IMR-90 (cell line): ENCODE measurements at regions of chr3 and their contacts with region 1.

Region 1: DNA sequence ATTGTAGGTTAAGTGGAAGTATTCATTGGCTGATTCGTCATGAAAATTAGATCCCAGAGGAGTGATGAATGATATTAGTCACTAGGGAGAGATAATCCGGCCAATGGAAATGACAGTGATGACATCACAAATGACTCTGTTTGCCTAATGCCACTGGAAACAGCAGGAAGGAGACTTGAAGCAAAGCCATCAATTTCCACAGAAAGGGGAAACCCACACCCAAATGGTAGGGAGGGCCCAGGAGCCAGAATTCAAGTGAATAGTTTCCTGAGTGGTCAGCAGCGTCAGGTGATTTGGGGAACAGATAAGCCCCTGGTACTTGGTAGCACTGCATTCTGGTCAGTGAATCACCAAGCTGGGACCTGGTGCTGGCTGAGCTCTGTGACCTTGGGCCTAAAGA is 3.3 kb upstream of the ADAMTS9 start:
- DNase-seq: peak; percentile 35
- ATAC-seq: no peak
- H3K4me3 ChIP-seq: no peak overlapping the region
- H3K27ac ChIP-seq: no peak overlapping the region
- H3K4me1 ChIP-seq: no peaks in the 10 kb centered on the region
- H3K27me3 ChIP-seq: no peaks in the 10 kb centered on the region
- CTCF ChIP-seq: no peak
- POLR2A ChIP-seq: no peak
- RAD21 ChIP-seq: no peak

Region 2: GRCh38 chr3:64595253-64595694 is 95.8 kb before region 1 on chr3:
- CTCF ChIA-PET with region 1: no interaction called
- POLR2A ChIA-PET with region 1: no interaction called
- dilution Hi-C with region 1: no loop called
- in situ Hi-C with region 1: no loop called
- intact Hi-C with region 1: no loop called
- DNase-seq: peak; percentile 70
- ATAC-seq: peak; percentile 66
- H3K4me3 ChIP-seq: no peak overlapping the region
- H3K27ac ChIP-seq: no peak overlapping the region
- H3K4me1 ChIP-seq: no peaks in the 10 kb centered on the region; the same call in 1 of the 2 replicates
- H3K27me3 ChIP-seq: no peaks in the 10 kb centered on the region
- CTCF ChIP-seq: no peak
- POLR2A ChIP-seq: no peak
- RAD21 ChIP-seq: no peak

Region 3: DNA sequence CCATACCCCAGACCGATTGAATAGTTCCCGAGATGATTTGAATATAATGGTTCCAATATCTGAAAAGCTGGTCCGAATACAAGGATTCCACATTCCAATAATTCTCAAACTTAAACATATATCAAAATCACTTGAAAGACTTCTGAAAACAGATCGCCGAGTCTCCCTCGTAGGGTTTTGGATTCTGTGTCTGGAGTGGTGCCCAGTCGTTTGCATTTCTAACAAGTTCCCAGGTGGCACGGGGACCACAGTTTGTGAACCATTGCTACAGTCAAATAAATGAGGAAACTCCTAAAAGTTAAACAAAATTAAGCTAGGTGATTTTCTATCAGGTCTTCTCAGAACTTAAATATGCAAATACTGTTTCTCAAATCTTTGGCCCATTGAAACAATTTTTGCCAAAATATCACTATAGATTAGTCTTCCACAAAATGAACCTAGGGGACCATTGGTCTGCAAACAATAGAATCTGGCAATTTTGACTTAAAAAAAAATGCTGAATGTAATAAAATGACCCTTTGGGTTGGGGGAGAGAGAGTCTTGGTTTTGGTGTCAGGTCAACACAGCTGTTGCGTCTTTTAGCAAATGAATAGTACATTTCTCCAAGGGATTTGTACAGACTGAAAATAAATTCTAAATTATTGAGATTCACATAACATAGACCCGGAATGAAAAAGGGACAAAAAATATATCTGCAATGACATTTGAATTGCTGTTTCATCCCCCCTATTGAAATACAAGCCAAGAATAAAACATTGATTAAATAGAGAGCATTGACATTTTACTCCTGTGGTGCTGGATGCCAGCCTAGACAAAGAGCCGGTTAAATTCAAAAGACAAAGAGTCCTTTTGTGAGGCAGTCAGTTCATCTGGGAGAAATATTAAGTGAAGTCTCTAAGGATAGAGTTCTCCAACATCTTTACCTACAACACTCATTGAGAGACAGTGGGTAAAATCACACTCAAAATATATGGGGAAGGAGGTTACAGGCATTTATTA is 172.5 kb after region 1 on chr3:
- CTCF ChIA-PET with region 1: no interaction called
- POLR2A ChIA-PET with region 1: no interaction called
- dilution Hi-C with region 1: no loop called
- in situ Hi-C with region 1: no loop called
- intact Hi-C with region 1: no loop called
- DNase-seq: no peak
- ATAC-seq: no peak
- H3K4me3 ChIP-seq: no peak overlapping the region
- H3K27ac ChIP-seq: no peak overlapping the region
- H3K4me1 ChIP-seq: peaks cover 2% of the 10 kb centered on the region; the same call in 1 of the 2 replicates
- H3K27me3 ChIP-seq: no peaks in the 10 kb centered on the region
- CTCF ChIP-seq: no peak
- POLR2A ChIP-seq: no peak
- RAD21 ChIP-seq: no peak

Region 4: DNA sequence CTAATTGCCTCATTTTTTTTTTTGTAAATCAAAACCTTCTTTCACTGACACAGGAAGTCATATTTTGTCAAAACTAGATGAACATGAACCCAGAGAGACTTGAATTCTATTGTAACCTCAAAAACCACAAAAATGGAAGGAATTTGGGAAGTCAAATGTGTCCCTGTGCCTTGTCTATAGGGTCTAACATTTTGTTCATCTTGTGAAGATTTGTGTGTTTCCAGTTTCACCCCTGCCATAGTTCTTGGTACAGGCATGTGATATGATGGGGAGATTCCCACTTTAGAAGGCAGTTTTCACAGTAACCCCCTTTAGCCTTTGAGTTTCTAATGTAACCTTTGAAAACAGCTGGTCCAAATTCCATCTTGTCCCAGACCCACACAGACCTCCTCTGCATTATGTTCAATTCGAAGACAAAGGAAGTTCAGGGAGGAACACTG is 315.3 kb after region 1 on chr3:
- CTCF ChIA-PET with region 1: no interaction called
- POLR2A ChIA-PET with region 1: no interaction called
- dilution Hi-C with region 1: no loop called
- in situ Hi-C with region 1: no loop called
- intact Hi-C with region 1: loop called (anchors 10 kb)
- DNase-seq: peak; percentile 18
- ATAC-seq: peak; percentile 40
- H3K4me3 ChIP-seq: no peak overlapping the region
- H3K27ac ChIP-seq: no peak overlapping the region
- H3K4me1 ChIP-seq: peaks cover 4% of the 10 kb centered on the region; the same call in 1 of the 2 replicates
- H3K27me3 ChIP-seq: no peaks in the 10 kb centered on the region
- CTCF ChIP-seq: no peak
- POLR2A ChIP-seq: no peak
- RAD21 ChIP-seq: no peak